PC-9 (cell line): ENCODE measurements at regions of chr4 and their contacts with region 1.

Region 1: DNA sequence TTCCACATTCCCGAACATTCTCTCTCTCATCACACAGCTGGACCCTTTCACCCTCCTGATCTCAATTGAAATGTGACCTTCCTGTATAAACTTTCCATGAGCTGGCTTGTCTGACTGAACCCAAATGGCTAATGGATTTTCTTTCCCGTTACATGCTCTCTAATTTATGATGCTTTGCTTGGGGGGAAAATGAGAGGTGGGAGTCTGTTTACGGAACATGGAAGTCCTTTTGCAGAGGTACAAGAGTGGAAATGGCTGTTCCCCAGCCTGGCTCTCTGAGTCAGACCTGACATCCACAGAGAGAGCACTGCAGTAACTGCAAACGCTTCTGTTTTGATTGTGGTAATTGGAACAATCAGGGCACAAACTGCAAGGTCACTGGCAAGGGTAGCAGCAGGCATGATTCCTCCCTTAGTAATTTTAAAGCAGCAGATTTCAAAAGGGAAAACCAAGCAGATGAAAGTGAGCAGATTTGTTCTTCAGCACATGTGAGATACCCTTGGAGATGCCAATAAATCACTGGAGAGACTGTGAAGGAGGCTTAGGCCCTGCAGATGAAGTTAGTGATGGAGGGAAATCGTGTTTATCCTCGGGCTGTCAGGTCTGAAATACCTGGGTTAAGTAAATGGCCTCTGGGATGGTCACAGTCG is 83.9 kb downstream of the SNCA start:
- DNase-seq: peak; percentile 45 to 51
- H3K4me3 ChIP-seq: peak overlapping the region; percentile 26; the same call in 1 of the 2 replicates
- H3K27ac ChIP-seq: peak overlapping the region; percentile 84
- H3K4me1 ChIP-seq: peaks cover 15% of the 10 kb centered on the region
- H3K27me3 ChIP-seq: no peaks in the 10 kb centered on the region
- CTCF ChIP-seq: no peak

Region 2: DNA sequence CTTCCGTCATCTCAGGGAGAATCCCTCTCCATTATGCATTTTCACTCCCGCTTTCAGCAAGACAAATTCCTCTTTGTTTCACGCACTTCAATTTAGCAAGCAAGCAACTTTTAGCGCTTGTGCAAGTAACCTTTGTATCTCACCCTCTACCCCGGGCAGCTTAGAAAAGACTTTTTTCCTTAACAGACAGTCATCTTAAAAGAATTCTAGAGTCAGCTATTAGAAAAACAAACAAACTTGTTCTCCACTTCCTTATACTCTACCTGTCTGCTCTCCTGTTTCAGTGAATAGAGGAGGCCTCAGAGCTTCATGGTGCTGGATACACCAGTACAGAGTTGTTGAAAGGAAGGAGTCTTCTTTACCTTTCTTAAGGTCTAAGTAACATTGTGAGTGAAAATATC is 629.6 kb before region 1 on chr4:
- CTCF ChIA-PET with region 1: no interaction called
- POLR2A ChIA-PET with region 1: no interaction called
- intact Hi-C with region 1: no loop called
- DNase-seq: peak; percentile 27 to 90
- H3K4me3 ChIP-seq: no peak overlapping the region
- H3K27ac ChIP-seq: peak overlapping the region; percentile 71
- H3K4me1 ChIP-seq: peaks cover 30% of the 10 kb centered on the region
- H3K27me3 ChIP-seq: no peaks in the 10 kb centered on the region
- CTCF ChIP-seq: no peak

Region 3: GRCh38 chr4:89625599-89626298 is 127.3 kb before region 1 on chr4:
- CTCF ChIA-PET with region 1: no interaction called
- POLR2A ChIA-PET with region 1: no interaction called
- intact Hi-C with region 1: no loop called
- DNase-seq: no peak
- H3K4me3 ChIP-seq: no peak overlapping the region
- H3K27ac ChIP-seq: no peak overlapping the region
- H3K4me1 ChIP-seq: no peaks in the 10 kb centered on the region
- H3K27me3 ChIP-seq: no peaks in the 10 kb centered on the region
- CTCF ChIP-seq: no peak

Region 4: GRCh38 chr4:89708903-89709421 is 44.1 kb before region 1 on chr4:
- CTCF ChIA-PET with region 1: no interaction called
- POLR2A ChIA-PET with region 1: no interaction called
- intact Hi-C with region 1: no loop called
- DNase-seq: no peak
- H3K4me3 ChIP-seq: no peak overlapping the region
- H3K27ac ChIP-seq: no peak overlapping the region
- H3K4me1 ChIP-seq: no peaks in the 10 kb centered on the region
- H3K27me3 ChIP-seq: no peaks in the 10 kb centered on the region
- CTCF ChIP-seq: no peak

Region 5: GRCh38 chr4:89800012-89800516 is 47.0 kb after region 1 on chr4:
- CTCF ChIA-PET with region 1: no interaction called
- POLR2A ChIA-PET with region 1: no interaction called
- intact Hi-C with region 1: loop called (anchors 2 kb)
- DNase-seq: no peak
- H3K4me3 ChIP-seq: no peak overlapping the region
- H3K27ac ChIP-seq: peak overlapping the region; percentile 47
- H3K4me1 ChIP-seq: no peaks in the 10 kb centered on the region
- H3K27me3 ChIP-seq: no peaks in the 10 kb centered on the region
- CTCF ChIP-seq: no peak